ENCODE measurements at regions of chr11 and their contacts with region 1.

Region 1: DNA sequence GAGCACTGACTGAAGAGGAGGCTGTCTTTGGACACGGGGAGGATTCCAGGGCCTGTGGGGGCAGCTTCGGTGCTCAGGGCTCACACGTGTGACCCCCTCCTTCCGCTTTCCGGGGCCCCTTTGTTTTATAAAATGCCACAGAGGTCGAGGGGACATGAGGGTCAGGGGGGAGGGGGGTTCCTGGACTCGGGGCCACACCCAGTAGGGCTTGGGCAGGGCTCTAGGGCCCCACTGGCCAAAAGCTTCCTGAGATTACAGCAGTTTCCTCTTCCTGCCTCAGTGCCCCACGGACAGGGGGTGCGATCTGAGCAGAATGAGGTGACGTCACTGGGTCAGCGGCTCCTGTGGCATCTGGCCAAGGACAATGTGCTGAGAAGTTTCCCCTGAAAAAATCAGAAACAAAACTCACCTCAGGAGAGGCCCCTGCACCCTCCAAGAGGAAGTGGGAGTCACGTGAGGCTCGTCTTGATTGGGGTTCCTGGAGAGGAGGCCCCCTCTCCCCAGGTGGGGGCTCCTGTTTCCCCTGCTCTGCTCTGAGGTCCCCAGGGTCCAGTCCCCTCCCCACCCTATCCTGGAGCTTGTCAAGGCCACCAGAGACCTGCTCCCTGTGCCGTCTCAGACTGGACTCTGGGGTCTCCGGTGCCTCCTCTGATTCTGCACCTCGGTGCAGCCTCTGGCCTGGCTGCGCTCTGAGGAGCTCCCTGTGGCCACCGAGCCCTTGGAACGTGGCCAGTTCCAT is 6.4 kb upstream of the IFITM3 start:
- DNase-seq: peak; percentile 46
- ATAC-seq: peak; percentile 65
- H3K4me3 Mint-ChIP-seq: peak overlapping the region; percentile 53
- H3K27ac Mint-ChIP-seq: peak overlapping the region; percentile 92
- H3K4me1 Mint-ChIP-seq: peaks cover 56% of the 10 kb centered on the region
- H3K27me3 Mint-ChIP-seq: no peaks in the 10 kb centered on the region
- CTCF ChIP-seq: no peak

Region 2: DNA sequence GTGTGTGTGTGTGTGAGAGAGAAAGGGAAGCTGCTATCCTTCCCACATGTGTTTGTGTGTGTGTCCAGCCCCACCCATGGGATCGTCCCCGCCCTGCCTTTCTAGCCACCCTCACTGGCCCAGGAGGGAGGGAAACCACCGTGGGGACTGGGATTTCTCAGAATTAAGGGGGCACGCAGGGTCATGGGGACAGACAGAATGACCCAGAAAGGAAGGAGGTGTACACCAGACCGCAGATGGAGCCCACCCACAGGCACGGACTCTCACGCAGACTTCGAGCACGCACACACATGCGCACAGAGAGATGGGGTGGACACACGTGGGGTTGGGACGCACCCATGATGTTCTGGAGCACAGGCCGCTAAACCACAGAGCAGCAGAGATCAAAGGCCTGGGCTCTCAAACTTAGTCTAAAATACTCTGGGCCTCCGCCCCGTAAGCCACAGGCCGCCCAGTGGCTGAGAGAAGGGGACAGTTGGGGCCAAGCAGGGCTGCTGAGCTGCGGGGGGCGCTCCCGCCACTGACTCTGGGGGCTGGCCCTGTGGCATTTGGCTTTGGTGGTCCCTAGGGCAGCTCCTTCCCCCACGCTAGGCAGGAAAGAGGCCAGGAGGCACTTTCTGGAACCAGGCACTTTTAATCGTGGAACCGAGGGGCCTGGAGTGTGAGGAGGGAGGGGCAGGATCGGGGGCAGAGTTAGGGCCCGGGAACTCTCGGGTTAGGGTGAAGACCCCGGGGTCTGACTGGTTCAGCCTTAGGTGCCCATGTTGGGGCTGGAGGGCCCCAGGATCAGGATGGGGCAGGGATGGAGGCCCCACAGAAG is 29.2 kb before region 1 on chr11:
- CTCF ChIA-PET with region 1: no interaction called
- POLR2A ChIA-PET with region 1: no interaction called
- intact Hi-C with region 1: no loop called
- DNase-seq: peak; percentile 12
- ATAC-seq: no peak
- H3K4me3 Mint-ChIP-seq: no peak overlapping the region
- H3K27ac Mint-ChIP-seq: no peak overlapping the region
- H3K4me1 Mint-ChIP-seq: peaks cover 11% of the 10 kb centered on the region
- H3K27me3 Mint-ChIP-seq: no peaks in the 10 kb centered on the region
- CTCF ChIP-seq: no peak

Region 3: GRCh38 chr11:313787-314547 is 13.0 kb before region 1 on chr11 and contains the start of gene IFITM1:
- CTCF ChIA-PET with region 1: interaction called, 3 read pairs
- POLR2A ChIA-PET with region 1: interaction called, 10 read pairs
- intact Hi-C with region 1: loop called (anchors 2 kb)
- DNase-seq: peak; percentile 42
- ATAC-seq: peak; percentile 16
- H3K4me3 Mint-ChIP-seq: peak within 1 kb of the TSS; percentile 81
- H3K27ac Mint-ChIP-seq: peak within 1 kb of the TSS; percentile 89
- H3K4me1 Mint-ChIP-seq: peaks cover 60% of the 10 kb centered on the region
- H3K27me3 Mint-ChIP-seq: no peaks in the 10 kb centered on the region
- CTCF ChIP-seq: no peak
- total RNA-seq, gene IFITM1: 21.2 and 25.3 TPM in 2 replicates